ENCODE measurements at regions of chr1 and their contacts with region 1.

Region 1: DNA sequence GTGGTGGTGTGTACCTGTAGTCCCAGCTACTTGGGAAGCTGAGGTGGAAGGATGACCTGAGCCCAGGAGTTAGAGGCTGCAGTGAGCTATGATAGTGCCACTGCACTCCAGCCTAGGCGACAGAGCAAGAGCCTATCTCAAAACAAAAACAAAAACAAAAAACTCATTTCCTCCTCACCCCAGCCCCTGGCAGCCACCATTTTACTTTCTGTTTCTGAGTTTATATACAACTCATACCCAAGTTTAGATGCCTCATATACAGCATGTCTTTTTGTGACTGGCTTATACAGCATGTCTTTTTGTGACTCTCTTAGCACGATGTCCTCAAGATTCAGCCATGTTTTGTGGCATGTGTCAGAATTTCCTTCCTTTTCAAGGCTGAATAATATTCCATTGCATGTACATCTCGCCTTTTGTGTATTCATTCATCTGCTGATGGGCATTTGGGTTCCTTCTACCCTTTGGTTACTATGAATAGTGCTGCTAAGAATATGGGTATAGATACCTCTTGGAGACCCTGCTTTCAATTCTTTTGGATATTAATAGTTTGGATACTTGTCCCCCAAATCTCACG is 14.7 kb downstream of the COA7 start:
- DNase-seq: no peak
- H3K4me3 ChIP-seq: no peak overlapping the region
- H3K27ac ChIP-seq: no peak overlapping the region
- H3K4me1 ChIP-seq: no peaks in the 10 kb centered on the region
- H3K27me3 ChIP-seq: no peaks in the 10 kb centered on the region
- CTCF ChIP-seq: no peak

Region 2: GRCh38 chr1:51792864-51793263 is 890.6 kb before region 1 on chr1:
- CTCF ChIA-PET with region 1: no interaction called
- POLR2A ChIA-PET with region 1: no interaction called
- intact Hi-C with region 1: no loop called
- DNase-seq: no peak
- H3K4me3 ChIP-seq: no peak overlapping the region
- H3K27ac ChIP-seq: peak overlapping the region; percentile 47
- H3K4me1 ChIP-seq: no peaks in the 10 kb centered on the region
- H3K27me3 ChIP-seq: no peaks in the 10 kb centered on the region
- CTCF ChIP-seq: no peak

Region 3: DNA sequence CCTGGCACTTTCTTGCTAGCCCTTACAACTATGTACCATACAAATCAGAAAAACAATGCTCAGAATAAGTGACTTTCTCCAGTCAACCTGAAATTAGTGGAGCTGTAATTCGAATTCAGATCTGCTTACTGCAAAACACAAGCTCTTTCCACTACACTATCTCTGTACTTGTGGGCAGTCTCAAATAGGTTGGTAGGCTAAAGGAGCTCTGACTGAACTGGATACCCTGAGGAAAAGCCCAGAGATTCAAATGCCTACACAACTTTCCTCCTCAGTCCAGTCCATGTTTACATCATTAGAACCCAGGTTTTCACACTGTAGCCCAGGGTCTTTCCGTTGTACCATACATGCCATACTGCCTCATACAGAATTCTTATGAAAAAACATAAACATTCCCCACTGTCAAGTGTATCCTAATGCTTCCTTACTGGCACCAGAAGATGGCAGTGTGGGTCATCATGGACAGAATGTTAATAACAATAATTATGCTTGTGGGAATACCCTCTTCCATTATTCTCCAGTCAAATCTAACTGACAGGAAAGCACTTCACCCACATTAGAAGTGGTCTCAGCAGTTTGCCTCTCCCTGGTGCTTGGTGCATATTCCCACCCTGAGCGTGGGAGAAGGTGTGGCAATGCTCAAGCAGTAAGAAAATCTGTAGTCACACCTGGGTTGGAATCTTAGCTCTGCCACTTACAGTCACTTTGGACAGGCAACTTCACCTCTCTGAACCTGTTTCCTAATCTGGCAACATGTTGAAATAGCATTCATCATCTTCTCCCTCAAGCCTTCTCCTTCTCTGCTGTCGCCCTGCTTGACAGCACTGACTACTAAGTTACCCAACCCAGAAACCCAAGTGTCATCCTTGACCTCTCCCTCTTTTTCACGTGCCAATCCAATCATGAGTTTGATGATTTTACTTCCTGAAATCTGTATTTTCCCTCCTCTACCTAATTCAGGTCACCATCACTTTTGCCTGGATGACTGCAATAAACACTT is 556.0 kb before region 1 on chr1:
- CTCF ChIA-PET with region 1: no interaction called
- POLR2A ChIA-PET with region 1: no interaction called
- intact Hi-C with region 1: loop called (anchors 5 kb)
- DNase-seq: peak; percentile 84
- H3K4me3 ChIP-seq: no peak overlapping the region
- H3K27ac ChIP-seq: no peak overlapping the region
- H3K4me1 ChIP-seq: no peaks in the 10 kb centered on the region
- H3K27me3 ChIP-seq: peaks cover 5% of the 10 kb centered on the region
- CTCF ChIP-seq: peak; percentile 84

Region 4: DNA sequence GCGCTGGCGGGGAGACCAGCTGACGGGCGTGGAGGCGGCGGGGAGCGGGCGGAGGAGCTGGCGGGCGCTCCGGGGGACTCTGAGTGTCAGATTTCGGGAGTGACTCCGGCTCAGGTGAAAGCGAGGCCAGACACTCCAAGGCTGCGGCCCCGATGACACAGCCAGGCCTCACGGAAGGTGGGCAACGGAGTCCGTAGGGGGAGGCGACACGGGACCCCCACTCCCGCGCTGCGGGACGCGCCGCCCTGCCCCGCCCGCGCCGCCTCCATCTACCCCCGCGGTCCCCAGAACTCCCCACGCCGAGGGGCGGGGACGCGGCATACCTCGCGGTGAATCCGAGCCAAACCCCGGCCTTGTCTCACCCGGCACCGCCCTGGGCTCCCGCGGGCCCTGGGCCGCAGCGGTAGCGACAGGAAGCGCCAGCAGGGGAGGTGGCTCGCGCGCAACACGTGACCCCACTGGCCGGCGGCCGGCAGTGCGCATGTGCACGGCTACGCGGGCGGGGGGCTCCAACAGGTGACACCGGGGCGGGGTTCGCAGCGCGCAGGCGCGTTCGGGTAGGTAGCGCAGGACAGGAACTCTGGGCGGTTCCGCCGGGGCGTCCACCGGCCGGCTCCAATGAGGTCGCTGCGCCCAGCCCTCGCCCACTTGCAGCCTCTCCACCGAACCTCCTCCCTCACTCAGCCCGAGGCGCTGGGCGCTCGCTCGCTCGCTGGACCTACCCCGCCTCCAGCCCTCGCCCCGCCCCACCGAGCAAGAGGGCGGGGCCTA is 317.5 kb before region 1 on chr1 and contains the start of gene CC2D1B:
- CTCF ChIA-PET with region 1: no interaction called
- POLR2A ChIA-PET with region 1: no interaction called
- intact Hi-C with region 1: loop called (anchors 10 kb)
- DNase-seq: peak; percentile 99
- H3K4me3 ChIP-seq: peak within 1 kb of the TSS; percentile 92
- H3K27ac ChIP-seq: peak within 1 kb of the TSS; percentile 91
- H3K4me1 ChIP-seq: peaks cover 12% of the 10 kb centered on the region
- H3K27me3 ChIP-seq: no peaks in the 10 kb centered on the region
- CTCF ChIP-seq: no peak; the same call in 1 of the 2 replicates
- total RNA-seq, gene CC2D1B: 30.9 and 34.7 TPM in 2 replicates

Region 5: DNA sequence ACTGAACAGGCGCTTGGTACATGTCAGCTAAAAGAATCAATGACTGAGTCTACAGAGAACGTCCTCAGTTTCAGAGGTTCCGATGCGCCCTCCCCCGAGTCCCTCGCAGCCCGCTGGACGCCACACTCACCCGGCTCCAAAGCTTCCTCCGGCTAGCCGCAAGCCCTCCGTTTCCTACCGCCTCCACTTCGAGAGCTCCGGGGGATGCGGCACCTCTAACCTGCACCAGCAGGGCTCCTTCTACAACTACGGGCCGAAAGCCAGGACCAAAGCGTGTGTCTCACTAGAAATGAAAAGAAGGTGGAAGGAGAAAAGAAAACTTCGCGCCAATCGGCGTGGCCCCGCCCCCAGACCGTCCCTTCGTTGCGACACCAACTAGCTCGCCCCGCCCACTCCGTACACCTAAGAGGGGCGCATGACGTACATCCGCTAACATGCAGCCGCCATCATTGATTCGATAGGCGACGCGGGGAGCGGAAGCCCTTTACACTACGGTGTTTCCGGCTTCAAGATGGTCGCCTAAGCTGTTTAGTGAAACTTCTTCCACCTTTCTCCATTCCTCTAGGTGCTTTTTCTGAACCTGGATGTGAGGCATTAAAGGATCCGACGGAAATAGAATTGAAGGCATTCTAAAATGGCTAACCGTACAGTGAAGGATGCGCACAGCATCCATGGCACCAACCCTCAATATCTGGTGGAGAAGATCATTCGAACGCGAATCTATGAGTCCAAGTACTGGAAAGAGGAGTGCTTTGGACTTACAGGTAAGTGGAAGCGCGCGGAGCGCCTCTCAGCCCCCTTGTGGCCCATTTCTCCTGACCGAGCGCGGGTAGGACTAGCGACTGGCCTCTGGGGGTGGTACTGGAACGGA is 279.1 kb before region 1 on chr1 and contains the starts of genes ORC1 and PRPF38A:
- CTCF ChIA-PET with region 1: interaction called, 14 read pairs
- POLR2A ChIA-PET with region 1: no interaction called
- intact Hi-C with region 1: loop called (anchors 1 kb)
- DNase-seq: peak; percentile 99
- H3K4me3 ChIP-seq: peak within 1 kb of the TSS; percentile 83
- H3K27ac ChIP-seq: peak within 1 kb of the TSS; percentile 95
- H3K4me1 ChIP-seq: peaks cover 13% of the 10 kb centered on the region
- H3K27me3 ChIP-seq: no peaks in the 10 kb centered on the region
- CTCF ChIP-seq: peak; percentile 38
- total RNA-seq, gene ORC1: 50.4 and 54.0 TPM in 2 replicates
- total RNA-seq, gene PRPF38A: 83.2 and 95.7 TPM in 2 replicates

Region 6: GRCh38 chr1:53112271-53112774 is 428.9 kb after region 1 on chr1:
- CTCF ChIA-PET with region 1: no interaction called
- POLR2A ChIA-PET with region 1: interaction called, 25 read pairs
- intact Hi-C with region 1: no loop called
- DNase-seq: no peak
- H3K4me3 ChIP-seq: no peak overlapping the region
- H3K27ac ChIP-seq: no peak overlapping the region
- H3K4me1 ChIP-seq: peaks cover 14% of the 10 kb centered on the region
- H3K27me3 ChIP-seq: no peaks in the 10 kb centered on the region
- CTCF ChIP-seq: no peak